Natural killer cell (primary cell): ENCODE measurements at regions of chr10 and their contacts with region 1.

Region 1: GRCh38 chr10:73848821-73849489 is 25.4 kb downstream of the CAMK2G start:
- DNase-seq: peak; percentile 94 to 96
- ATAC-seq: peak; percentile 98 to 99 (median 99)
- H3K4me3 ChIP-seq: no peak overlapping the region
- H3K4me3 Mint-ChIP-seq: peak overlapping the region; percentile 79
- H3K27ac ChIP-seq: peak overlapping the region; percentile 27
- H3K27ac Mint-ChIP-seq: peak overlapping the region; percentile 75 to 87
- H3K4me1 ChIP-seq: peaks cover 18% of the 10 kb centered on the region
- H3K4me1 Mint-ChIP-seq: peaks cover 16 to 22% of the 10 kb centered on the region in 2 donors
- H3K27me3 ChIP-seq: no peaks in the 10 kb centered on the region
- H3K27me3 Mint-ChIP-seq: no peaks in the 10 kb centered on the region
- CTCF ChIP-seq: peak; percentile 97

Region 2: GRCh38 chr10:73874267-73875138 is 25.5 kb after region 1 on chr10 and contains the start of gene CAMK2G:
- intact Hi-C with region 1: loop called (anchors 1 kb)
- DNase-seq: peak; percentile 71 to 93
- ATAC-seq: peak; percentile 78 to 93 (median 85)
- H3K4me3 ChIP-seq: peak within 1 kb of the TSS; percentile 60
- H3K4me3 Mint-ChIP-seq: peak within 1 kb of the TSS; percentile 91
- H3K27ac ChIP-seq: peak within 1 kb of the TSS; percentile 62
- H3K27ac Mint-ChIP-seq: peak within 1 kb of the TSS; percentile 80 to 84
- H3K4me1 ChIP-seq: peaks cover 55% of the 10 kb centered on the region
- H3K4me1 Mint-ChIP-seq: peaks cover 48 to 59% of the 10 kb centered on the region in 2 donors
- H3K27me3 ChIP-seq: no peaks in the 10 kb centered on the region
- H3K27me3 Mint-ChIP-seq: peaks cover 0 to 5% of the 10 kb centered on the region in 2 donors
- CTCF ChIP-seq: no peak
- total RNA-seq, gene CAMK2G: 53.6 to 73.8 (median 62.3) TPM

Region 3: GRCh38 chr10:73879296-73880173 is 30.6 kb after region 1 on chr10:
- intact Hi-C with region 1: loop called (anchors 1 kb)
- DNase-seq: peak; percentile 93 to 99
- ATAC-seq: peak; percentile 88 to 97 (median 90)
- H3K4me3 ChIP-seq: no peak overlapping the region
- H3K4me3 Mint-ChIP-seq: peak overlapping the region; percentile 40
- H3K27ac ChIP-seq: peak overlapping the region; percentile 2
- H3K27ac Mint-ChIP-seq: peak overlapping the region; percentile 44 to 78
- H3K4me1 ChIP-seq: peaks cover 33% of the 10 kb centered on the region
- H3K4me1 Mint-ChIP-seq: peaks cover 21 to 36% of the 10 kb centered on the region in 2 donors
- H3K27me3 ChIP-seq: no peaks in the 10 kb centered on the region
- H3K27me3 Mint-ChIP-seq: peaks cover 7% of the 10 kb centered on the region in 2 donors
- CTCF ChIP-seq: peak; percentile 89

Region 4: DNA sequence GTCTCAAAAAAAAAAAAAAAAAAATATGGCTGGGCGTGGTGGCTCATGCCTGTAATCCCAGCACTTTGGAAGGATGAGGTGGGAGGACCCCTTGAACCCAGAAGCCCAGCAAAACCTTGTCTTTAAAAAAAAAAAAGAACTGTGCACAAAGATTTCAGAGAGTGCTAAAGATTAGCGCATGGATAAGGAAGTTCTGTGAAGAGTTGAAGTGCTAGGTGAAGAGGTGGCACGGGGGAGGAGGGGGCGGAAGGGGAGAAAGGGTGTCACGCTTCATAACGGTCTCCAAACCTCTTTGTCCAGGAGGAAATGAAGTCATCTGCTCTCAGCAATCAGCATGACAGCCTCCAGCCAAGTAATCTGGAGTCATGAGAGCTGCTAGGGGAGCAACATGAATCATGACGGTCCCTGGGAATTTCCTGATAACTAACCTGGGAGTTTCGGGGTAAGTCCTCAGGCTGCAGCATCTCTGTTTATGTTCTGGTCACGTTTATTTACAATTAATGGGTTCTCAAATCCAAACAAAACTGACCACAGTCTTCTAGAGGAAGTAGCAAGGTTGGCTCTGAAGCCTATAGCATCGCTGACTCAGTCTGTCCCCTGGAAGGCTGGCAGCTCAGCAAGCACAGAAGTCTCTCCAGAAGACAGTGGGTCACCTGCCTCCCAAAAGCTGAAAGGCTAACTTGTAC is 60.0 kb after region 1 on chr10:
- intact Hi-C with region 1: loop called (anchors 1 kb)
- DNase-seq: peak; percentile 48 to 71
- ATAC-seq: peak; percentile 76 to 83 (median 81)
- H3K4me3 ChIP-seq: no peak overlapping the region
- H3K4me3 Mint-ChIP-seq: peak overlapping the region; percentile 56
- H3K27ac ChIP-seq: no peak overlapping the region
- H3K27ac Mint-ChIP-seq: peak overlapping the region in 1 of 2 donors; percentile 54
- H3K4me1 ChIP-seq: peaks cover 46% of the 10 kb centered on the region
- H3K4me1 Mint-ChIP-seq: peaks cover 31 to 34% of the 10 kb centered on the region in 2 donors
- H3K27me3 ChIP-seq: peaks cover 30% of the 10 kb centered on the region
- H3K27me3 Mint-ChIP-seq: peaks cover 30 to 32% of the 10 kb centered on the region in 2 donors
- CTCF ChIP-seq: no peak

Region 5: GRCh38 chr10:73940634-73941221 is 91.8 kb after region 1 on chr10:
- intact Hi-C with region 1: loop called (anchors 1 kb)
- DNase-seq: peak; percentile 83 to 85
- ATAC-seq: peak; percentile 98 to 100 (median 100)
- H3K4me3 ChIP-seq: no peak overlapping the region
- H3K4me3 Mint-ChIP-seq: peak overlapping the region; percentile 78
- H3K27ac ChIP-seq: no peak overlapping the region
- H3K27ac Mint-ChIP-seq: peak overlapping the region in 1 of 2 donors; percentile 73
- H3K4me1 ChIP-seq: peaks cover 10% of the 10 kb centered on the region
- H3K4me1 Mint-ChIP-seq: peaks cover 8 to 9% of the 10 kb centered on the region in 2 donors
- H3K27me3 ChIP-seq: no peaks in the 10 kb centered on the region
- H3K27me3 Mint-ChIP-seq: no peaks in the 10 kb centered on the region
- CTCF ChIP-seq: peak; percentile 94

Region 6: DNA sequence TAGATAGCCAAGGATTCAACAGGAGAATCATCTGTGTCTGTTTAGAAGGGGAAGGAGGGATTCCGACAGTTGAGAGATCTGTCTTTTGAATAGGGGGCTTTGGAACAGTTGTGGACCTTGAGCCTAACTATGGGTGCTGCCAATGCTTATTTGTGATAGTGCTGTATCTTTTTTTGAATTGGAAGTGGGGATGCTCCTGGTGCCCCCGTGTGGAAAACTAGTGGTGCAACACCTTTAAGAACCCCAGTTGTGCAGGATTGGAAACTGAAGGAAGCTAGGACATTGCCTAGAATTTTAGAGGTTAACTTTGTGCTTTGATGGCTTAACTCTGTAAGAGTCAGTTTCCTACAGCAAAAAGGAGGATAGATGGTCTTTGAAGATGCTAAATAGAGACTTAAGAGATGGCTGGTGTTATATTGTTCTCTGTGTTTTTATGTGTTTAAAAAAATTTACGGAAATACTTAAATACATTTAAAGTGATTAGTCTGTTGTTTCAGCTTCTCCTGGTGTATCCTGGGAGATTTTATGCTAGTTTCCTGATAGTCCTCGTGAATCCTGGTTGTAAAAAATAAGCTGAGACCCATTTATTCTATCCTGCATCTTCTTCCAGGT is 232.3 kb after region 1 on chr10:
- intact Hi-C with region 1: loop called (anchors 1 kb)
- DNase-seq: peak in 1 of 2 donors; percentile 72
- ATAC-seq: peak in 2 of 3 donors; percentile 49 to 60
- H3K4me3 ChIP-seq: no peak overlapping the region
- H3K4me3 Mint-ChIP-seq: no peak overlapping the region
- H3K27ac ChIP-seq: no peak overlapping the region
- H3K27ac Mint-ChIP-seq: peak overlapping the region; percentile 24 to 71
- H3K4me1 ChIP-seq: peaks cover 9% of the 10 kb centered on the region
- H3K4me1 Mint-ChIP-seq: peaks cover 55 to 65% of the 10 kb centered on the region in 2 donors
- H3K27me3 ChIP-seq: no peaks in the 10 kb centered on the region
- H3K27me3 Mint-ChIP-seq: no peaks in the 10 kb centered on the region
- CTCF ChIP-seq: peak; percentile 47